Right cardiac atrium (tissue), 5 donors: ENCODE measurements at regions of chr17 and their contacts with region 1.

Region 1: GRCh38 chr17:50853015-50853615 is 13.0 kb downstream of the TOB1 start:
- DNase-seq: no peak
- ATAC-seq: peak in 1 of 2 donors; percentile 28
- H3K4me3 ChIP-seq: no peak overlapping the region
- H3K27ac ChIP-seq: peak overlapping the region; percentile 67
- H3K4me1 ChIP-seq: peaks cover 2% of the 10 kb centered on the region
- H3K27me3 ChIP-seq: no peaks in the 10 kb centered on the region

Region 2: DNA sequence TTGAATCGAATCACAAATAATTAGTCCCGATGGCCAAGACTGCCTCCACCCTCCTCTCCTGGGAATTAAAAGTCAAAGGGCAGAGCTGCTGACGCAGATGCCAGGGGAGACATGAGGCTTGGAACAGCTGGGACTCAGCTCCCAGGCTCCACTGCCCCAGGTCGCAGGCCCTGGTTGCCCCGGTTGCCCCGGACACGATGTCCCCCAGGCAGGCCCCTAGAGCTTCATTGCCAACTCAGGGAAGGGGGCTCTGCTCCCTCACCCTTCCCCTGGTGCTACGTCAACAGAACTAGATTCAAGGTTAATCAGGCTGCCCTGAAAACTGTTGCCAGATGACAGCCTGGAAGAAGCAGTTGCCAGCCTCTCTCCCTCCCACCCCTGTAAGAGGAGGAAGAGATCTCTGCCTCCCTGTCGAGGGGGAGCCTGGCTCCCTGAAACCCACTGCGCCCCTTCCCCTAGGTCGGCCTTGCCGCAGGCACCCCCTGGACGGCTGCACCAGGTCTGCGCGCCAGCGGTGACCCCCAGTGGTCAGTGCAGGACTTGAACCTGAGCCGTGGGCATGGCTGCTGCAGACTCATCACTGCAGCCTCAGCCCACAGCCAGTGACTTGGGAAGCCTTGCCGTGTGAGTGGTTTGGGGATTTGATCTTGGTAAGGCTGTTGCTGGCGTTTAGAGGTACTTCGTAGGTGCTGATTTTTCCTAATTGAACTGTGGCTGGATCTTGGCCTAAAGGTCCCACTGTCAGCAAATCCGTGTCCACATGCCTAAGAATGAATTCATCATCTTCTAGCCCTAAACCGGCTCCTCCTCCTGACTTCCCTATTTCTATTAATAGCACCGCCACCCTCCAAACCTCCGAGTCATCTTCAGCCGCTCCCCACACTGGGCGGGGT is 97.1 kb after region 1 on chr17:
- intact Hi-C with region 1: loop called (anchors 2 to 5 kb)
- DNase-seq: peak; percentile 77 to 91 (median 89)
- ATAC-seq: peak; percentile 78 to 83
- H3K4me3 ChIP-seq: no peak overlapping the region
- H3K27ac ChIP-seq: peak overlapping the region; percentile 58
- H3K4me1 ChIP-seq: peaks cover 11% of the 10 kb centered on the region
- H3K27me3 ChIP-seq: no peaks in the 10 kb centered on the region

Region 3: GRCh38 chr17:51166197-51166986 is 313.3 kb after region 1 on chr17 and contains the start of gene NME2:
- intact Hi-C with region 1: no loop called
- DNase-seq: peak; percentile 93 to 97 (median 96)
- ATAC-seq: peak; percentile 97 to 98
- H3K4me3 ChIP-seq: peak within 1 kb of the TSS; percentile 94
- H3K27ac ChIP-seq: peak within 1 kb of the TSS; percentile 95
- H3K4me1 ChIP-seq: no peaks in the 10 kb centered on the region
- H3K27me3 ChIP-seq: no peaks in the 10 kb centered on the region
- total RNA-seq, gene NME2: 311 to 374 (median 327) TPM